ENCODE measurements at regions of chr11 and their contacts with region 1.

Region 1: DNA sequence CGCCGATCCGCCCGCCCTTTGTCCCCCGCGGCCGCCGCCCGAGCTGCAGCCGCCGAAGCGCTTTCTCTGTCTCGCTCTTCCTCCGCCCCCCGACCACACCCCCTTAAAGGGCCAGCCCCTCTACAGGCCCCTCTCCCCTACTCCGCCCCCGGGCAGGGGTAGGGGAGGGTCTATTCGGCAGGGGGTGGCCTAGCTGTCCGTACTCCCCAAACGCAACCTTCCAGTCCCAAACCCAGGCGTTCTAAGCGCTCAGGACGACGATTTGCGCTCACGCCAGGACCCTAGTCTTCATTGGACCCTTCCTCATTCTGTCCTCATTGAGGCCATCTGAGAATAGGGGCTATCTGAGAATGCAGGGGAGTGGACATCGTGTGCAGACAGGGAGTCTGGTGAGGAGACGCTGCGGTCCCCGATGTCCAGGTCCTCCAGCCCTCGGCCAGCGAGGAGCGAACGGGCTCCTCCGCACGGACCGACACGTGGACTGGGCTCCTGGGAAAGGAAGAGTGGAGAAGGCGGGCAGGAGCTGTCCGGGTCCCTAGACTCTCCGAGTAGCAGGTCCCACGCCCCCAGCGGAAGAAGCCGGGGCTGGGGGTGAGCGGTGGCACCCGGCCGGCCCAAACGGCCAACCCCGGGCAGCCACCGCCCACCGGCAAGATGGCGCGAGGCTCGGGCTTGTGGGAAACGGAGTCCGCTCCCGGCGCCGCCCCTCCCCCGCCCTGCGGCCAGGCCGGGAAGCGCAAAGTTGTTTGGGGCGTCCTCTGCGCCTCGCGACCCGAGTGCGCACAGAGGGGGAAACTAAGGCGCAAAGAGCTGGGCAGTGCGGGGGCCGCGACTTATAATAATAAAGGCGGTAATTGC is at the start of gene PPP1R14B:
- DNase-seq: peak; percentile 84 to 89
- ATAC-seq: peak; percentile 40 to 73
- H3K4me3 ChIP-seq: peak within 1 kb of the TSS; percentile 84
- H3K27ac ChIP-seq: peak within 1 kb of the TSS; percentile 99 to 100
- H3K4me1 ChIP-seq: peaks cover 45% of the 10 kb centered on the region
- CTCF ChIP-seq: no peak
- EP300 ChIP-seq: no peak
- POLR2A ChIP-seq: peak; percentile 14; the same call in 1 of the 2 replicates
- RAD21 ChIP-seq: no peak
- polyA plus RNA-seq, gene PPP1R14B: 129 and 154 TPM in 2 replicates

Region 2: GRCh38 chr11:64185816-64186498 is 61.1 kb before region 1 on chr11 and contains the start of gene STIP1:
- CTCF ChIA-PET with region 1: interaction called, 4 read pairs
- POLR2A ChIA-PET with region 1: interaction called, 13 read pairs
- DNase-seq: peak; percentile 99 to 100
- ATAC-seq: peak; percentile 84 to 93
- H3K4me3 ChIP-seq: peak within 1 kb of the TSS; percentile 52
- H3K27ac ChIP-seq: peak within 1 kb of the TSS; percentile 79 to 96
- H3K4me1 ChIP-seq: peaks cover 26% of the 10 kb centered on the region
- CTCF ChIP-seq: no peak
- EP300 ChIP-seq: no peak
- POLR2A ChIP-seq: peak; percentile 79
- RAD21 ChIP-seq: no peak
- polyA plus RNA-seq, gene STIP1: 288 and 300 TPM in 2 replicates

Region 3: GRCh38 chr11:64225612-64226506 is 21.2 kb before region 1 on chr11 and contains the starts of genes NUDT22 and TRPT1:
- CTCF ChIA-PET with region 1: interaction called, 10 read pairs
- POLR2A ChIA-PET with region 1: interaction called, 5 read pairs
- DNase-seq: peak; percentile 80 to 90
- ATAC-seq: peak; percentile 77 to 83
- H3K4me3 ChIP-seq: peak within 1 kb of the TSS; percentile 97
- H3K27ac ChIP-seq: peak within 1 kb of the TSS; percentile 93 to 99
- H3K4me1 ChIP-seq: peaks cover 30% of the 10 kb centered on the region
- CTCF ChIP-seq: peak; percentile 28; the same call in 2 of the 3 replicates
- EP300 ChIP-seq: no peak
- POLR2A ChIP-seq: peak; percentile 67
- RAD21 ChIP-seq: 0 out of 5 replicates have a peak, but pooled peaks of 1 of the 2 experiments have one; percentile 14
- polyA plus RNA-seq, gene NUDT22: 21.5 and 21.7 TPM in 2 replicates
- polyA plus RNA-seq, gene TRPT1: 18.6 and 25.2 TPM in 2 replicates

Region 4: GRCh38 chr11:64269380-64270234 is 22.5 kb after region 1 on chr11:
- CTCF ChIA-PET with region 1: interaction called, 220 read pairs
- POLR2A ChIA-PET with region 1: interaction called, 53 read pairs
- DNase-seq: peak; percentile 87 to 100
- ATAC-seq: peak; percentile 80 to 91
- H3K4me3 ChIP-seq: peak overlapping the region; percentile 72
- H3K27ac ChIP-seq: peak overlapping the region; percentile 94 to 97
- H3K4me1 ChIP-seq: peaks cover 32% of the 10 kb centered on the region
- CTCF ChIP-seq: peak; percentile 12; the same call in 1 of the 3 replicates
- EP300 ChIP-seq: no peak
- POLR2A ChIP-seq: peak; percentile 32
- RAD21 ChIP-seq: no peak

Region 5: DNA sequence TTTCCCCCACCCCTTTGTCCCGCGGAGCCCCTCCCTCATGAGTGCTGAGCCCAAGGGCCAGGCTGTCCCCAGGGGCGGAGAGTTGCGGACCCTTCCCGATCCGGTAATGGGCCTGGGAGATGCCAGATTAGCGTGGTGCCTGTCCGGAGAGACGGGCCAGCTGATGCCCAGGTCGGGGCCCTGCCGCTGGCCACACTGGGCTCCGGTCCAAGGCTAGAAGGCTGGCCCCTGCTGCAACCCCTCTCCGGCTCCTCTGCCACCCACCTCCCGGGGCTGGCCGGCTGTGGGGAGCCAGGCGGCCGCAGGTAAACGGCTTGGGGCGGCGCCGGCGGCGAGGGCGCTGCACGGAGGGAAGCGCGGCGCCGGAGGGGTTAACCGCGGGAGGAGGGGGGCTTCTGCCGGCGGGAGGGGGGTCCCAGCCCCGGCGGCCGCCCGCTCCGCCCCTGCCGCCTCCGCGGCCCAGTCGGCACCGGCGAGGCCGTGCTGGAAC is 44.2 kb after region 1 on chr11 and contains the start of gene KCNK4:
- CTCF ChIA-PET with region 1: interaction called, 12 read pairs
- POLR2A ChIA-PET with region 1: interaction called, 7 read pairs
- DNase-seq: no peak
- ATAC-seq: no peak
- H3K4me3 ChIP-seq: no peak within 1 kb of the TSS
- H3K27ac ChIP-seq: 0 out of 6 replicates have a peak within 1 kb of the TSS, but pooled peaks of 1 of the 2 experiments have one; percentile 30
- H3K4me1 ChIP-seq: peaks cover 8% of the 10 kb centered on the region; the same call in 2 of the 3 replicates
- CTCF ChIP-seq: no peak
- EP300 ChIP-seq: no peak
- POLR2A ChIP-seq: no peak
- RAD21 ChIP-seq: no peak
- polyA plus RNA-seq, gene KCNK4: not detected in 2 replicates